ENCODE measurements at regions of chr10 and their contacts with region 1.

Region 1: GRCh38 chr10:14653271-14654228 is 121.1 kb downstream of the FAM107B start:
- DNase-seq: peak; percentile 74
- H3K4me3 Mint-ChIP-seq: peak overlapping the region; percentile 43
- H3K27ac Mint-ChIP-seq: peak overlapping the region; percentile 94
- H3K4me1 Mint-ChIP-seq: peaks cover 61% of the 10 kb centered on the region
- H3K27me3 Mint-ChIP-seq: no peaks in the 10 kb centered on the region
- CTCF ChIP-seq: no peak

Region 2: GRCh38 chr10:14571866-14572507 is 81.6 kb before region 1 on chr10:
- CTCF ChIA-PET with region 1: interaction called, 3 read pairs
- intact Hi-C with region 1: loop called (anchors 10 kb)
- DNase-seq: peak; percentile 73
- H3K4me3 Mint-ChIP-seq: peak overlapping the region; percentile 20
- H3K27ac Mint-ChIP-seq: peak overlapping the region; percentile 83
- H3K4me1 Mint-ChIP-seq: peaks cover 34% of the 10 kb centered on the region
- H3K27me3 Mint-ChIP-seq: no peaks in the 10 kb centered on the region
- CTCF ChIP-seq: no peak

Region 3: DNA sequence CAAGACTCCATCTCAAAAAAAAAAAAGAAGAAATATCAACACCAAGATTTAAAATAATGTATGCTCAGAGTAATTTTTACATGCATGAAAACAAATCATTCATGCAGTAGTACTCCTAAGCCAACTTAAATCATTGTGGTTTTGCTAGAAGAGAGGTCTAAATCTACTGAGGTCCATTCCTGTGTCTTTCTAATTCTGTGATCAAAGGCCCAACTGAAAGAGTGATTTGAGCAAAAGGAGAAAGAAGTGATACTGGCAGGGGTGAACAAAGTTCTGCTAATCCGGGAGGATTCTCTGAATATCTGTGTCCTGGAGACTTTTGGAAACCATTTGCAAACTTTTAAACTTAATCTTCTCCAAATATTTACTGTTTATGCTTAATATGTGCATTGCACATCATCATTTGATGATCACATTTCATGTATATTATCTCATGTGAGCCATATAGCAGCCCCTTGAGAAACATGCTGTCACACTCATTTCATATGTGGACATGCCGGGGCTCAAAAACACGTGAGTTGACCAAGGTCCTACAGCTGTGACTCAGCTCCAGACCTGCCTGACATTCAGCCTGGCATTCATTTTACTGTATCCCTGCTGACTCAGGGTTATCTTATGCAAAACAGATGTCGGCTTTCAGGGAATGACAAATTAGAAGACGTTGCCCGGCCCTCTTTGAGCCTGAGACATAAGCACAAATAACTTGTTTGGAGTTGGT is 44.7 kb after region 1 on chr10:
- CTCF ChIA-PET with region 1: no interaction called
- intact Hi-C with region 1: no loop called
- DNase-seq: no peak
- H3K4me3 Mint-ChIP-seq: no peak overlapping the region
- H3K27ac Mint-ChIP-seq: no peak overlapping the region
- H3K4me1 Mint-ChIP-seq: peaks cover 17% of the 10 kb centered on the region
- H3K27me3 Mint-ChIP-seq: no peaks in the 10 kb centered on the region
- CTCF ChIP-seq: no peak

Region 4: DNA sequence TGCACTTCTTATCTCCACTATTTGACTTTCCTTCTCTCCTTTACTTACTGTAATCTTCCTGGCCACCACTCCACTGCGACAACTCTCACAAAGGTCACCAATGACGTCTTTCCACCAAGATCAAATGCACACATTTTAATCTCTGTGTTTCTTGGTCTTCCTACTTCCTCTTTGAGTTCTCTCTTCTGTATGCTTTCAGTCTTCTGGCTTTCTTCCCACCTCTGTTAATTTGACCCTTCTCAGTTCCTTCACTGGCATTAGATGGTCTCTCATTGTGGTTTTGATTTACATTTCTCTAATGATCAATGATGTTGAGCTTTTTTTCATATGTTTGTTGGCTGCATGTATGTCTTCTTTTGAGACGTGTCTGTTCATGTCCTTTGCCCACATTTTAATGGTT is 89.3 kb after region 1 on chr10:
- CTCF ChIA-PET with region 1: no interaction called
- intact Hi-C with region 1: loop called (anchors 10 kb)
- DNase-seq: no peak
- H3K4me3 Mint-ChIP-seq: no peak overlapping the region
- H3K27ac Mint-ChIP-seq: peak overlapping the region; percentile 2
- H3K4me1 Mint-ChIP-seq: peaks cover 14% of the 10 kb centered on the region
- H3K27me3 Mint-ChIP-seq: no peaks in the 10 kb centered on the region
- CTCF ChIP-seq: no peak